Right ventricle myocardium inferior (tissue), 1 donor: ENCODE measurements at regions of chr20 and their contacts with region 1.

Region 1: DNA sequence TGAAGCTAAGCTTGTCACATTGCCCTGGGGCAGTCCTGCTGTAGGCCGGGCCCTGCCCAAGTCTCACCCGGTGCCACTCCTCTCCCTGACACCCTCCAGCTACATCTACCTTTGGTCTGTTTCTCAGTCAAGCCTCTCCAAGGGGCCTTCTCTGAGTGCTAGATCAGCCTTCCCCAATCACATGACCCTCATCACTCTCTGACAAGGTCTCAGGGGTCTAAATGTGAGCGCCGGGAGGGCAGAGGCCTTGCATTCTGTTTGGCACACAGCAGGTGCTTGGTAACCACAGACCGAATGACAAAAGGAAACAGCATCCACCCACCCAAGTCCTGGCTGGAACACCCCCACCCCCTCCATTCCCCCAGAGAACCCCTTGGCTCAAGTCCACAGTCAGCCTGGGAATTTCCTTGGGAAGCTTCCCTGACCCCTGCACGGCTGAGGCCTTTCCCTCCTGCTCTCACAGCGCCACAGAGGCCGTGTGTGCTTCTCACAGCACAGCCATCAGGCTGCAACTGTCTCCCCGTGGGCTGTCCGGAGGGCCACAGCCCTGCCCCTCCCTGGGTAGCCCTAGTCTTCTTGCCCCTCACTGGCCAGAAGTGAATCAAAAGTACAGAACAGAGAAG is 32.9 kb downstream of the PKIG start:
- DNase-seq: peak; percentile 61
- ATAC-seq: peak; percentile 44

Region 2: GRCh38 chr20:44651684-44652423 is 36.6 kb after region 1 on chr20 and contains the start of gene ADA:
- intact Hi-C with region 1: loop called (anchors 5 kb)
- DNase-seq: peak; percentile 84
- ATAC-seq: peak; percentile 84
- total RNA-seq, gene ADA: 10.7 TPM